ENCODE measurements at regions of chr13 and their contacts with region 1.

Region 1: DNA sequence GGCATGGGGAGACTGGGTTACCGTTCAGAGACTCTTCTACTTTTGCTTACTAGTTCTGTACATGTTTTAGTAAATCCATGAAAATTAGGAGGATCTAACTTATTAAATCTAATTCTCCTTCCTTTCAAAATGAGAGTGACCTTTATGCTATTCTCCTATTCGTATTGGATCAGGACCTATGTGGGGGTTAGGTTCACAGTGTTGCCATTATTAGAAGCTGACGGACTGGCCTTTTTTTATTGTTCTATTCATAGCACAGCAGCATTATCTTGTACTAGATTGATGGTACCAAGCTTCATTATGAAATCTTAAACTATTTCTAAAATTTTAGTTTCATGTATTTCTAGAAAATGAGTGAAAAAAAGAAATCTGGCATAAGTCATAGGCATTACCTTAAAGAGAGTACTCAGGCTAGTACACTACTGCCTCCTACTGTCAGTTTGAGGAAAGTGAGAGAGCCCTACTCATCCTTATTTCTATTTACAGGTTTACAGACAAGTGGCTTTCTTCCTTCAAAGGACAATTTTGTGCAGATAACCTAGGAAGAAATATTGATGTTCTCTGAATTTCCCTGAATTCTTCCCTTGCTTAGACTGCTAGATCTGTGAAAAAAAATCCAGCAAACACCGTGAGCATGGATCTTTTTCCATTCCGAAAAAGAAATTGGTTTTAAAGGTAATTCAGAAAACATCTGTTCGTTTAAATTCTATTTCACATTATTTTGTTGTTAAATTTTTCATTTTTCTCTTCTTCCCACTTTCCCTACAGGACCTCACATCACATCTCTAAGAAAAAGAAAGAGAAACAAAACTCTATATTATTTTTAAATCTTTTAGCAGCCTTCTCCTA is 485.5 kb downstream of the DIAPH3 start:
- H3K4me3 ChIP-seq: no peak overlapping the region
- H3K27ac ChIP-seq: no peak overlapping the region
- H3K4me1 ChIP-seq: no peaks in the 10 kb centered on the region
- CTCF ChIP-seq: no peak

Region 2: DNA sequence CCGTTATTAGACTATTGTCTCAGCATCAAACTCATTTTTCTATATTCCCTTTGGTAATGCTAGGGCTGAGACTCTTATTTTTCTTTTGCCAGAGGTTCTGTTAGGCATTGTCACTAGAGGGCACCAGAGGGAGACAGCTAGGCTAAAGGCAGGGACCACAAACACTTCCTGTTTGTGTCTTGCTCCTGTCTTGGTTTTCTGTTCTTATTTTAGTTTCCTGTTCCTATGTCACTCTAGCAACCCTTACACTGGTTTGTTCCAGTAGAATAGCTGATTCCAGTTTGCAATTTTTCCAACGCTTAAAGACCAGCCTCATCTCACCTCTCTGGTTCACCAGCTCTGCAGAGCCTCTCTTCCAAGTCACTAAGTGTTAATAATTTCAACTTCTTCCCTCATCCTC is 286.5 kb before region 1 on chr13:
- CTCF ChIA-PET with region 1: interaction called, 22 read pairs
- POLR2A ChIA-PET with region 1: no interaction called
- H3K4me3 ChIP-seq: no peak overlapping the region
- H3K27ac ChIP-seq: no peak overlapping the region
- H3K4me1 ChIP-seq: no peaks in the 10 kb centered on the region
- CTCF ChIP-seq: no peak

Region 3: DNA sequence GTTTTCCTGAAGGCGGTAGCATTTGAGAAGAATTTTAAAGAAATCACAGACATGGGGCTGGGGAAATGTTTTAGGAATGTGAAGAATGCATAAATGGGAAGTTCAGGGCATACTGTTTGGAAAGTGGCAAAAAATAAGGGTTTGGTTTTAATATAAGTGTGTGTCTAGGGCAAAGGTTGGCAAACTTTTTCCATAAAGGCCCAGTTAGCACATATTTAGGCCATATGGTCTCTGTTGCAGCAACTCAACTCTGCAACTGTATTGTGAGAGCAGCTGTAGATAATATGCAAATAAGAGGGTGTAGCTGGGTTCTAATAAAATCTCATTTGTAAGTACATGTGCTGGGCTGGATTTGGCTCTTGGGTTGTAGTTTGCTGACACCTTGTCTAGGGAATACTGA is 36.4 kb before region 1 on chr13:
- CTCF ChIA-PET with region 1: no interaction called
- POLR2A ChIA-PET with region 1: no interaction called
- H3K4me3 ChIP-seq: no peak overlapping the region
- H3K27ac ChIP-seq: no peak overlapping the region
- H3K4me1 ChIP-seq: no peaks in the 10 kb centered on the region
- CTCF ChIP-seq: no peak

Region 4: GRCh38 chr13:60329221-60329983 is 651.2 kb after region 1 on chr13:
- CTCF ChIA-PET with region 1: interaction called, 13 read pairs
- POLR2A ChIA-PET with region 1: no interaction called
- H3K4me3 ChIP-seq: no peak overlapping the region
- H3K27ac ChIP-seq: no peak overlapping the region
- H3K4me1 ChIP-seq: no peaks in the 10 kb centered on the region
- CTCF ChIP-seq: no peak